ENCODE measurements at regions of chr12 and their contacts with region 1.

Region 1: GRCh38 chr12:56448860-56449621 is at the start of gene TIMELESS:
- DNase-seq: peak; percentile 72 to 85
- H3K4me3 ChIP-seq: peak within 1 kb of the TSS; percentile 89
- H3K27ac ChIP-seq: peak within 1 kb of the TSS; percentile 57
- H3K4me1 ChIP-seq: no peaks in the 10 kb centered on the region; the same call in 1 of the 2 replicates
- H3K27me3 ChIP-seq: no peaks in the 10 kb centered on the region
- CTCF ChIP-seq: no peak
- total RNA-seq, gene TIMELESS: 27.1 and 30.9 TPM in 2 replicates

Region 2: DNA sequence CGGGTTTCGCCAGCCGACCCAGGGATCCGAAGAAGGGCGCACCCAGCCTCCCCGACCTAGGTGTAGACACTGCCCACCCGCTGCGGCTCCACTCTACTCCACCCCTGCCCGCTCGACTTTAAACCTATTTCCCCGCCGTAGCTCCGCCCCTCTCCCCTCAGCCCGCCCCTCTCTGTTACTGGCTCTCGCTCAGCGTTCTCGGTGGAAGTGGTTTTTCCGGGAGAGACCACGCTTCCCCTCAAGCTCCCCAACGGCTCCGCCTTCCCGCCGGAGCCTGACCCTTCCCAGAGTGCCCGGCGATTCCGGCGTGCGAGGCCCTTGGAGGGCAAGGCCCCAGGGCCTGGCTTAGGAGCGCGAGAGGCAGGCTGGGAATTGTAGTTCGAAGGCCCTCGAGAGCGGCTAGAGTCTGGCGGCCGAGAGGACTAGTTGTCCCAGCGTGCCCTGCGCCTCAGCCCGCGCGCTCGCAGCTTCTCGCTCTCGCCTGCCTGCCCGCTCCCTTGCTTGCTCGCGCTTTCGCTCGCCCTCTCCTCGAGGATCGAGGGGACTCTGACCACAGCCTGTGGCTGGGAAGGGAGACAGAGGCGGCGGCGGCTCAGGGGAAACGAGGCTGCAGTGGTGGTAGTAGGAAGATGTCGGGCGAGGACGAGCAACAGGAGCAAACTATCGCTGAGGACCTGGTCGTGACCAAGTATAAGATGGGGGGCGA is 344.8 kb before region 1 on chr12 and contains the start of gene PA2G4:
- CTCF ChIA-PET with region 1: no interaction called
- POLR2A ChIA-PET with region 1: no interaction called
- intact Hi-C with region 1: loop called (anchors 1 kb)
- DNase-seq: peak; percentile 97 to 98
- H3K4me3 ChIP-seq: peak within 1 kb of the TSS; percentile 97
- H3K27ac ChIP-seq: peak within 1 kb of the TSS; percentile 50
- H3K4me1 ChIP-seq: peaks cover 25% of the 10 kb centered on the region
- H3K27me3 ChIP-seq: no peaks in the 10 kb centered on the region
- CTCF ChIP-seq: no peak
- total RNA-seq, gene PA2G4: 120 and 159 TPM in 2 replicates

Region 3: GRCh38 chr12:56189176-56189917 is 259.7 kb before region 1 on chr12 and contains the start of gene SMARCC2:
- CTCF ChIA-PET with region 1: interaction called, 11 read pairs
- POLR2A ChIA-PET with region 1: no interaction called
- intact Hi-C with region 1: no loop called
- DNase-seq: peak; percentile 71 to 91
- H3K4me3 ChIP-seq: peak within 1 kb of the TSS; percentile 99
- H3K27ac ChIP-seq: peak within 1 kb of the TSS; percentile 85
- H3K4me1 ChIP-seq: peaks cover 28% of the 10 kb centered on the region
- H3K27me3 ChIP-seq: no peaks in the 10 kb centered on the region
- CTCF ChIP-seq: peak; percentile 68
- total RNA-seq, gene SMARCC2: 70.3 and 86.4 TPM in 2 replicates

Region 4: GRCh38 chr12:56359851-56360767 is 88.9 kb before region 1 on chr12 and contains the start of gene STAT2:
- CTCF ChIA-PET with region 1: no interaction called
- POLR2A ChIA-PET with region 1: interaction called, 15 read pairs
- intact Hi-C with region 1: no loop called
- DNase-seq: peak; percentile 99
- H3K4me3 ChIP-seq: peak within 1 kb of the TSS; percentile 79
- H3K27ac ChIP-seq: peak within 1 kb of the TSS; percentile 85
- H3K4me1 ChIP-seq: peaks cover 17% of the 10 kb centered on the region
- H3K27me3 ChIP-seq: no peaks in the 10 kb centered on the region
- CTCF ChIP-seq: no peak
- total RNA-seq, gene STAT2: 76.6 and 80.8 TPM in 2 replicates

Region 5: DNA sequence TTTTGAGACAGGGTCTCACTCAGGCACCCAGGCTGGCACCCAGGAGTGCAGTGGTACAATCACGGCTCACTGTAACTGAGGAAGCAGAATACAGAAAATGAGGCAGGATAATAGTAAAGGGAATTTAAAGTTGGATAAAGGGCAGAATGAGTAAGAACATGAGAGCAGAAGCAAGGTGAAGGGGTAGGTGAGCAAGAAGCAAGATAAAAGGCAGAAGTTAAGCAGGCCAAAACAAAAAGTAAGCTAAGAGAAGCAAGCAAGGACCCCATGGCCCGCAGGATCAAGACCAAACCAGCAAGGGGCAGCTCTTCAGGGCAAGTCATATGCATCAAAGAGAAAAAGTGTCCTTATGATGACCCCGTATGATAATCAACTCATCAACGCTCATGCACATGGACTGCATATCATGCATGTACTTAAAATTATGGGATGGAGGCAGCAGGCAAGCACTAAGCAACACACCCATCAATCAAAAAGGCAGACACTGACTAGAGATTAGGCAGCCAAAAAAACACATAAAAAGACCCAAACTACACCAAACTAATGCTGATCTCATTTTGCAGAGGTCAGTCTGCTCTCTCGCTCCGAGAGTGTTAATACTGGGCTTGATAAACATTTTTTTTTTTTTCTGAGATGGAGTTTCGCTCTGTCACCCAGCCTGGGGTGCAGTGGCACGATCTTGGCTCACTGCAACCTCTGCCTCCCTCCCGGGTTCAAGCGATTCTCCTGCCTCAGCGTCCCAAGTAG is 11.4 kb before region 1 on chr12:
- CTCF ChIA-PET with region 1: interaction called, 12 read pairs
- POLR2A ChIA-PET with region 1: no interaction called
- intact Hi-C with region 1: no loop called
- DNase-seq: no peak
- H3K4me3 ChIP-seq: no peak overlapping the region
- H3K27ac ChIP-seq: no peak overlapping the region
- H3K4me1 ChIP-seq: no peaks in the 10 kb centered on the region
- H3K27me3 ChIP-seq: no peaks in the 10 kb centered on the region
- CTCF ChIP-seq: no peak

Region 6: GRCh38 chr12:56521590-56522371 is 72.7 kb after region 1 on chr12 and contains the start of gene RBMS2:
- CTCF ChIA-PET with region 1: interaction called, 10 read pairs
- POLR2A ChIA-PET with region 1: no interaction called
- intact Hi-C with region 1: no loop called
- DNase-seq: peak; percentile 76 to 82
- H3K4me3 ChIP-seq: peak within 1 kb of the TSS; percentile 80
- H3K27ac ChIP-seq: peak within 1 kb of the TSS; percentile 95
- H3K4me1 ChIP-seq: peaks cover 76% of the 10 kb centered on the region
- H3K27me3 ChIP-seq: no peaks in the 10 kb centered on the region
- CTCF ChIP-seq: no peak
- total RNA-seq, gene RBMS2: 44.7 and 81.8 TPM in 2 replicates

Measured in PC-9 (cell line).